ENCODE measurements at regions of chr15 and their contacts with region 1.

Region 1: DNA sequence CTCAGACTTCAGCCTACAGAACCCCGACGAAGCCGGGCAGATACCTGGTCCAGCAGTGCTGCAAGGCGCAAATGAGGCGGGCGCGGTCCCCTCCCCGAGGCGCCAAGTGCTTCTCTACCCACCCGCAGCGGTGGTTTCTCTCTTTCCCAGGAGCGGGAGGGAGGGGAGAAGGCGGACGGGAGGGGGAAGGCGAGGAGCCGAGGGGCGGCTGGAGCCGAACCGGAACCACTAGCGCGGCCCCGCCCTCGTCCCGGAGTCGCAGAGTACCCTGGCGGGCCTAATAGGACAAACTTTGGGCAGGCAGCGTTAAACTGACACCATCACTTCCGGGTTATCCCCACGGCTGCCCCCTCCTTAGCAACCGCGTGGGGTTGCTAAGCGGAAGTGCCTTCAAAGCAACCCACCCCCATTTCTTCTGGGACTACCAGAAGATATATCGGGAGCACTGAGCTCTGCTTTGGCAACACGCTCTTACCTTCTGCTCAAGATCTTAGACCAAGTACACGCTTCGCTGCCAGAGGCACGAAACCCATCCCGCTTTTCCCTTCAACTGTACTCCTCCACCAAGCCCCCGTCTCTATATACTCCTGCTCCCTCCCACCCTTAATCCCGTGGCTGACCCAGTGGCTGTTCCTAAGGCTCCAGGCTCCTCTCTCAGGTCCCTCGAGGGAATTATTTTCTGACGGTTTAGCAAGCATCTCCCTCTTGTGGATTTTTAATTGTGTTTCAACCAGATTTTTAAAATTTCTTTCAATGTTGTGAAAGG is at the start of gene CSNK1G1:
- DNase-seq: peak; percentile 91
- ATAC-seq: peak; percentile 99
- H3K4me3 ChIP-seq: peak within 1 kb of the TSS; percentile 78 to 97 (median 92)
- H3K27ac ChIP-seq: peak within 1 kb of the TSS; percentile 65 to 90 (median 80)
- H3K4me1 ChIP-seq: peaks cover 8 to 9% of the 10 kb centered on the region in 2 donors
- H3K27me3 ChIP-seq: no peaks in the 10 kb centered on the region
- CTCF ChIP-seq: peak in 2 of 5 experiments; percentile 17
- POLR2A ChIP-seq: peak in 1 of 2 donors; percentile 14
- total RNA-seq, gene CSNK1G1: 5.3 to 26.6 (median 6.5) TPM

Region 2: DNA sequence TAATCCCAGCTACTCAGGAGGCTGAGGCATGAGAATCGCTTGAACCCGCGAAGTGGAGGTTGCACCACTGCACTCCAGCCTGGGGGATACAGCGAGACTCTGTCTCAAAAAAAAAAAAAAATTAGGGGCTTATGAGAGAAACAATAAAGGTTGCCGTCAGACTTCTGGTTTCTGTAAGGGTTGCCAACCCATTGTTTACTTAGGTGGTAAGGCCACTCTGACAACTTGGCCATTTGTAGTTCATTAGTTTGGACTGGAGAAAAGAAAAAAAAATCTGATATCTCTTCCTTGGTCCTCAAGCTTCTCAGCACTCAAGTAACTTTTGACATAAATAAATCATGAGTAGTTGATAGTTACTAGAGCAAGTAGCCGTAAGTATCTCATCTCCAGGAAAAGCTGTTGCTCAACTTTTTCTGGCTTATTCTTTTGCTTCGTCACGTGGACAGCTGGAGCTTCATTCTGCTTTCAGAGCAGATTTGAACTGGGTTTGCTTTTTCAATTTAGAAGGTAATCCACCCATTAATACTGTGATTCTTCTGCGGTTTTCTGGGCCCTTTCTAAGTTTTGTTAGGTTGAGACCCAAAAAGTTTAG is 250.9 kb before region 1 on chr15:
- in situ Hi-C with region 1: no loop called
- intact Hi-C with region 1: loop called (anchors 10 kb)
- DNase-seq: peak; percentile 64
- ATAC-seq: peak; percentile 94 to 98
- H3K4me3 ChIP-seq: no peak overlapping the region
- H3K27ac ChIP-seq: peak overlapping the region; percentile 62 to 85 (median 78)
- H3K4me1 ChIP-seq: peaks cover 43 to 85% of the 10 kb centered on the region in 2 donors
- H3K27me3 ChIP-seq: no peaks in the 10 kb centered on the region
- CTCF ChIP-seq: no peak
- POLR2A ChIP-seq: no peak

Region 3: GRCh38 chr15:64209680-64210334 is 146.3 kb before region 1 on chr15:
- in situ Hi-C with region 1: loop called in 1 of 4 experiments (anchors 25 kb)
- intact Hi-C with region 1: no loop called
- DNase-seq: no peak
- ATAC-seq: no peak
- H3K4me3 ChIP-seq: no peak overlapping the region
- H3K27ac ChIP-seq: no peak overlapping the region
- H3K4me1 ChIP-seq: no peaks in the 10 kb centered on the region
- H3K27me3 ChIP-seq: no peaks in the 10 kb centered on the region
- CTCF ChIP-seq: peak in 4 of 5 experiments; percentile 23 to 43 (median 29)
- POLR2A ChIP-seq: no peak

Region 4: DNA sequence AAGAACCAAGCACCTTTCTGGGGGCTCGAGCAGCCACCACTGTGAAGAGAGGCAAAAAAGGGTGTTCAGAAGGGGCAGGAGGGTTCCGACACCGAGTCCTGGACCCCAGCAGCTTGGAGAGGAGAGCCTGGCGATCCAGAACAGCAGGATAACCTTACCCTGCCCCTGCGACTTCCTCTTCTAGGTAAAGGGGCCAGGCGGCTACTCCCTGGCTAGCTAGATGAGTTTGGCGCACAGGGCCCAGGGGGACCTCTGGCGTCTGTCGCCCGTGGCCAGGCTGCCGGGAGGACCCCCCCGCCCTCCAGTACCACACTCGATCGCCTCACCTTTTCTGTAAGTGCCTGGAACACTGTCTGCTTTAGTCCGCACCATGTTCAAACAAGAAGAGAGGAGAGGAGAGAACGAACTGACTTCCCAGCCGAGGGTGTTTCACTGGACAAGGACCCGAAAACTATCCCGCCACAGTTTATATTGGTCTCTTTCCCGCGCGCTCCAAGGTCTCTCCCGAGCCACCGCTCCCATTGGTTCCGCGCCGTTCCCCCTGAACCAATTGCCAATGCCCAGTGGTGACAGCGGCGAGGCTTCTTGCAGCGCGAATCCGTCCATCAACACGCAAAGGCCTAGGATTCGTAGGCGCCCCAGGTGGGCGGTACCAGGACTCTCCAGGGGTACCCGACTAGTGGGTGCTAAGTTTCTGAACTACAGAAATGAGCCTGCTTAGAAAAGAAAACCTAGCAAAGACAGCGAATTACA is 25.0 kb after region 1 on chr15 and contains the start of gene PCLAF:
- in situ Hi-C with region 1: no loop called
- intact Hi-C with region 1: loop called (anchors 1 kb)
- DNase-seq: peak; percentile 92
- ATAC-seq: peak; percentile 99 to 100
- H3K4me3 ChIP-seq: peak within 1 kb of the TSS; percentile 47 to 74 (median 61)
- H3K27ac ChIP-seq: no peak within 1 kb of the TSS
- H3K4me1 ChIP-seq: peaks cover 9 to 10% of the 10 kb centered on the region in 2 donors
- H3K27me3 ChIP-seq: no peaks in the 10 kb centered on the region
- CTCF ChIP-seq: no peak
- POLR2A ChIP-seq: no peak
- total RNA-seq, gene PCLAF: 1.6 TPM in 1 of 4 donors, not detected in the others

Region 5: GRCh38 chr15:64571857-64572291 is 215.7 kb after region 1 on chr15:
- in situ Hi-C with region 1: no loop called
- intact Hi-C with region 1: no loop called
- DNase-seq: no peak
- ATAC-seq: no peak
- H3K4me3 ChIP-seq: no peak overlapping the region
- H3K27ac ChIP-seq: no peak overlapping the region
- H3K4me1 ChIP-seq: peaks cover 2 to 8% of the 10 kb centered on the region in 2 donors
- H3K27me3 ChIP-seq: no peaks in the 10 kb centered on the region
- CTCF ChIP-seq: no peak
- POLR2A ChIP-seq: no peak